ENCODE measurements at regions of chr5 and their contacts with region 1.

Region 1: DNA sequence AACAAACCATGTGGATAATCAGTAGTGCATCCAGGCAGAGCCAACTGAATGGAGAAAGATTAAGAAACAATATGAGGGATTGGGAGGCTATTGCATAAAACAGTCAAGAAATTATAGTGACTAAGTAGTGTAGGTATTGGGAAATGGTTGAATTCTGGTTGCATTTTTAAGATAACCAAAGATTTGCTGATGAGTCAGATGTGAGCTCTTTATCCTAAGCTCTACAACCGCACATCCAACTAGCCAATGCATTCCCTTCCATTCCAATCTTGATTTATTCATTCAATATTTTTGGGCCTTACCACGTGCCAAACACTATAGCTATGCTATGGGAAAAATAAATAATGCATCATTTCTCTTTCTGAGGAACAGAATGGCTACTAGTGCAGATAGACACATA is 524.5 kb upstream of the RGMB start:
- DNase-seq: peak; percentile 80
- ATAC-seq: no peak
- H3K4me3 ChIP-seq: no peak overlapping the region
- H3K27ac ChIP-seq: no peak overlapping the region
- H3K4me1 ChIP-seq: peaks cover 5% of the 10 kb centered on the region; the same call in 1 of the 2 replicates
- H3K27me3 ChIP-seq: no peaks in the 10 kb centered on the region
- CTCF ChIP-seq: no peak

Region 2: DNA sequence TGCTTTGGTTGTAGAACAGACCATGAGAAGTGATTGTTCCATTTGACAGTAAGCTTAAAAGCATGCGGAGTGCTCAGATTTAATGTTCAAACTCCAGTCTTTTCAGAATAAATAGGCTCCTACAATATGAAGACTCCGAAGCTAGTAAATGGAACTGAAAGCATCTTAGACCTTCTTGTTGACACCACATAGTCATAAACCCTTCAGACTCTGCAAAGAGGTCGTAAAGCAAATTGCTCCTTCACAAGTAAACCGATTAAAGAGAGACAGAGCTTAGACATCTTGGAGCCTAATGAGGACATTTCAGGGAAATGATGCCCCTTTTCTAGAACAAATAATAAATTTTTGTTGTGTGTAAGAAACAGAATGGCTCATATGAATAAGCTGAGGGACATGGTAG is 554.9 kb before region 1 on chr5:
- CTCF ChIA-PET with region 1: no interaction called
- POLR2A ChIA-PET with region 1: no interaction called
- intact Hi-C with region 1: no loop called
- DNase-seq: no peak
- ATAC-seq: no peak
- H3K4me3 ChIP-seq: no peak overlapping the region
- H3K27ac ChIP-seq: no peak overlapping the region
- H3K4me1 ChIP-seq: no peaks in the 10 kb centered on the region
- H3K27me3 ChIP-seq: no peaks in the 10 kb centered on the region
- CTCF ChIP-seq: no peak

Region 3: GRCh38 chr5:99775189-99775588 is 1526.2 kb after region 1 on chr5:
- CTCF ChIA-PET with region 1: no interaction called
- POLR2A ChIA-PET with region 1: interaction called, 29 read pairs
- intact Hi-C with region 1: no loop called
- DNase-seq: no peak
- ATAC-seq: no peak
- H3K4me3 ChIP-seq: no peak overlapping the region
- H3K27ac ChIP-seq: no peak overlapping the region
- H3K4me1 ChIP-seq: no peaks in the 10 kb centered on the region
- H3K27me3 ChIP-seq: no peaks in the 10 kb centered on the region
- CTCF ChIP-seq: no peak

Measured in PC-3 (cell line).